Right ventricle myocardium inferior (tissue), 1 donor: ENCODE measurements at regions of chr1 and their contacts with region 1.

Region 1: DNA sequence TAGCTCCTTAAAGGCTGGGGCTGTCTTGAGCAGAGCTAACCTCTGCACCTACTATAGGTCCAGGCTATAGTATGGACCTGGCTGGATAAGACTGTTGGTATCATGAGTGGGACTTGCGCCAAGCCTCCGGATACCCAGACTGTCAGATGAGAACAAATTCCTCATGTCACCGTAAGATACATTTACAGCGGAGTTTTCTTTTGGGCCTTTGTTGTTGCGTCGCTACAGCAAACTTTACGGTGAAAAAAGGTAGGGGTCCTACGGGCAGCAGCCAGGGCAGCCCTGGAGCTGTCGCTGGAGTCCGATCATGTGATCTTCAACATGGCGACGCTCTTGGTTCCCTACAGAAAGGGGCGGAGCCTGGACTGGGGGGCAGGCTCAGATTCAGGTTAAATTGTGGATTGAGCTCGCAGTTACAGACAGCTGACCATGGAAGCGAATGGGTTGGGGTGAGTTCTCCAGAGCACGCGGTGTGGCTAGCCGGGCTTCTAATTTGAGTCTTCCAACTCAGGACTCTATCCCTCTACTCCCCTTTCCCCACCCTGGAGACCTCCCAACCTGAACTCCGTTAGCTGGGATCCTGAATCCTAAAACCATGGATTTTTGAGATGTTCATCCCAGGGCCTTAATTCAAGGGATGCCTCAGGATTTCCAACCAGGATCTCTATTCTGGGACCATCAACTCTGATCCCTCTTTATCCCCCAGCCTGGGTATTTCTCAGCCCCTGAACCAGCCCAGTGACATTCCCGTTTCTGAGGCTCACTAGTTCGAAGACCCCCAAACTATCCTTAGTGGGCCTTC is at the start of gene UROD:
- DNase-seq: peak; percentile 96
- ATAC-seq: peak; percentile 95
- total RNA-seq, gene UROD: 71.7 TPM

Region 2: DNA sequence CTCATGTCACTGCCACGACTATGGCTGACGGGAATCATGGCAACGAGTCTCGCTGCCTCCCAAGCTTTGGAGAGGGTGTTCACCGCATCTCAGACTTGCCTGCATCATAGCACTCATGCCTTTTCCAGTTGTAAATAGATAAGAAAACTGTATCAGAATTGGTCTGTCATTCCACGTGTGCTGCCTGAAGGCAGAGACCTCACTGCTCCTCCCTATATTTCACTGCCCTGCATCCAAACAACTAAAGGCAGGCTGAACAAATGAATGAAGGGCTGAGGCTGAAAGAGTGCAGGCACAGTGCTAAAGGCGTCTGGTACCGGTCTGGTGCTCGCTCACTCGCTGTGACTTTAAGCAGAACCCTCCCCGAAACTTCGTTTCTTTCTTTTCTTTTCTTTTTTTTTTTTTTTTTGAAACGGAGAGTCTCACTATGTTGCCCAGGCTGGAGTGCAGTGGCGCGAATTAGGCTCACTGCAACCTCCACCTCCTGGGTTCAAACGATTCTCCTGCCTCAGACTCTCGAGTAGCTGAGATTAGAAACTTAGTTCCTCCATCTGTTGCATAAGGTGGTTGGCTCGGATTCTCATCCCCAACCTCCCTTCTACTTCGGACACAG is 26.2 kb before region 1 on chr1:
- intact Hi-C with region 1: loop called (anchors 2 kb)
- DNase-seq: no peak
- ATAC-seq: no peak